Activated CD4-positive, alpha-beta memory T cell treated with anti-CD3 and anti-CD28 coated beads for 36 hours (primary cell): ENCODE measurements at regions of chr7 and their contacts with region 1.

Region 1: DNA sequence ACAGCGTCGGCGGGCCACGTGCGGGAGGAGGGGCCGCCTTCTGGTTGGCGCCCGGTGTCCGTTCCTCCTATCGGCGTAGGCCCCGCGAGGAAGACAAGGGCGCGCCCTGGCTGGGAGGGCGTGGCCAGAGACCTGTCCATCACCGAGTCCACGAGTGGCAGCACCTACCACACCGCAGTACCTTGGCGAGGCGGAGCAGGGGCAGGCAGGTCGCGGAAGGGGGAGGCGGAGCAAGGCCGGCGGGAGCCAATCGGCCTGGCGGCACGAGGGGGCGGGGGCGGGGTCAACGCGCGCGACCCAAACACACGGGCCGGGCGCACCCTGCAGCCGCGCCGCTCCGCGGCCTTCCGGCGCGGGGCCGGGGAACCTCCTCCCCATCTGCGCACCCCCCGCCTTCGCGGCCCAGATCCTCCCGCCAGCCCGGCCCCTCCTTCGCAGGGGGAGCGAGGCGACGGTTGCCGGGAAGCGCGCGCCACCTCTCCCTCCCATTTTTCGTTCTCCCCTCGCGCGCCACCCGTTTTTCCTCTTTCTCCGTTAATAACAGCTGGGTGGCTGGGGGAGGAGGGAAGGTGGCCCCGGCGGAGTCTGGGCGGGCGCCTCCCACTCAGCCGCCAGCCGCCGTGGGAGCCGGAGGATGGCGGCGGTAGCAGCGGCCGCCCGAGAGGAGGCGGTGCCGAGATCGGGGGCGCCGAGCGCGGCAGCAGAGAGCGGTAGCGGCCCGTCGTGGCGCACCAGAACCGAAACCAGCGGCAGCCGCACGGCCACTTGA is at the start of gene ZNRF2:
- DNase-seq: peak; percentile 100
- H3K4me3 Mint-ChIP-seq: peak within 1 kb of the TSS; percentile 78
- H3K27ac Mint-ChIP-seq: peak within 1 kb of the TSS; percentile 90
- H3K4me1 Mint-ChIP-seq: peaks cover 47% of the 10 kb centered on the region
- H3K27me3 Mint-ChIP-seq: no peaks in the 10 kb centered on the region
- total RNA-seq, gene ZNRF2: 9.6 to 10.5 TPM

Region 2: GRCh38 chr7:30134611-30135545 is 149.6 kb before region 1 on chr7 and contains the start of gene MTURN:
- CTCF ChIA-PET with region 1: no interaction called
- POLR2A ChIA-PET with region 1: no interaction called
- intact Hi-C with region 1: loop called (anchors 1 kb)
- DNase-seq: peak; percentile 88
- H3K4me3 Mint-ChIP-seq: peak within 1 kb of the TSS; percentile 86
- H3K27ac Mint-ChIP-seq: peak within 1 kb of the TSS; percentile 45
- H3K4me1 Mint-ChIP-seq: peaks cover 5% of the 10 kb centered on the region
- H3K27me3 Mint-ChIP-seq: no peaks in the 10 kb centered on the region
- total RNA-seq, gene MTURN: 3.1 to 3.7 TPM

Region 3: DNA sequence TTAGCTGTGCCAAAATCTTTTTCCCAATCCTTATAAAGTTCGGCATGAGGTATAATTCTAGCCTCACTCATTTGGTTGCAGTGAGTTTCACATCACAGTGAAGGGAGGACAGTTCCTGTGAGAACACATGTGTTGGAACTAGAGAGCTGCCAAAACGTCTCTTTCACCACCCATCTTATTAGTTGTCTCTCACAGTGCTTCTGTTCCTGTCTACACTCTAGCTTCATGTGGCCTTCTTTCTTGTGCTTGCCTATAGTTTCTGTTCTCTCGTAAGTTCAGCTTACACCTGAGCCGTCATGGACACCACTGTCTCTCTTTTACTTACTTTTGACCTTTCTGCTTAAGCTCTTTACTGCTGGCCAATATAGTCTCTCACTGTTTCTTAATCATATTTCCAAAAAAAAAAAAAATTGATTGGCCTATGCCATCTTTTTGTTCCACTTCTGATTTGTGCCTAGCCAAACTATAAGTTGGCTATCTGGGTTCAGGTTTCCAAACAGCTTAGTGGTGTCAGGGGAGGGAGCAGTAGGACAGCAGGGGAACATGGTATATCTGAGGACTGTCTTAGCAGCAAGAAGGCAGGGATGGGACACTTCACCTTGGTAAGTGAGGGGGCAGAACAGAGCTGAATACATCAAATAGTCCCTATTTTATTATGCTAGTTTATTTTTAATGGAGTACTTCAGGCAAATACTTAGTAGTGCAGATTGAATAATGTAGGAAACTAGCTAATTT is 38.0 kb after region 1 on chr7:
- CTCF ChIA-PET with region 1: interaction called, 10 read pairs
- POLR2A ChIA-PET with region 1: interaction called, 7 read pairs
- intact Hi-C with region 1: loop called (anchors 1 kb)
- DNase-seq: no peak
- H3K4me3 Mint-ChIP-seq: peak overlapping the region; percentile 73
- H3K27ac Mint-ChIP-seq: peak overlapping the region; percentile 86
- H3K4me1 Mint-ChIP-seq: peaks cover 72% of the 10 kb centered on the region
- H3K27me3 Mint-ChIP-seq: no peaks in the 10 kb centered on the region

Region 4: DNA sequence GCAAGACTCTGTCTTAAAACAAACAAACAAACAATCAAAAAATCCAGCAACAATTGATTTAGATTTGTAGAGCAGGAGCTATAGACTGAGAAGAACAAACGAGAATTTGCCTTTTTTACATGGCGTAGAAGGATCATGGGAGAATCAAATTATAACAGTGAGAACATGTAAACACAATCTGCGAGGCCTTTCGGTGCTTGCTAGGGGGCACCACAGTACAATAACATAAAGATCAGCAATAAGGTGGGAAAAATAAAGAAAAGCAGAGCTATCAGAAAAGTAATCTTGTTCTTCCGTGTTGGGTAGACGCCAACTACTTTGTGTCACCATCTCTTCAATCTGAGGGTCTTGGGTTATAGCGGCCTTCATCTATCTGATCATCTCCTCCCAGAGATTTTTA is 111.9 kb after region 1 on chr7:
- CTCF ChIA-PET with region 1: no interaction called
- POLR2A ChIA-PET with region 1: no interaction called
- intact Hi-C with region 1: no loop called
- DNase-seq: no peak
- H3K4me3 Mint-ChIP-seq: no peak overlapping the region
- H3K27ac Mint-ChIP-seq: no peak overlapping the region
- H3K4me1 Mint-ChIP-seq: no peaks in the 10 kb centered on the region
- H3K27me3 Mint-ChIP-seq: no peaks in the 10 kb centered on the region

Region 5: DNA sequence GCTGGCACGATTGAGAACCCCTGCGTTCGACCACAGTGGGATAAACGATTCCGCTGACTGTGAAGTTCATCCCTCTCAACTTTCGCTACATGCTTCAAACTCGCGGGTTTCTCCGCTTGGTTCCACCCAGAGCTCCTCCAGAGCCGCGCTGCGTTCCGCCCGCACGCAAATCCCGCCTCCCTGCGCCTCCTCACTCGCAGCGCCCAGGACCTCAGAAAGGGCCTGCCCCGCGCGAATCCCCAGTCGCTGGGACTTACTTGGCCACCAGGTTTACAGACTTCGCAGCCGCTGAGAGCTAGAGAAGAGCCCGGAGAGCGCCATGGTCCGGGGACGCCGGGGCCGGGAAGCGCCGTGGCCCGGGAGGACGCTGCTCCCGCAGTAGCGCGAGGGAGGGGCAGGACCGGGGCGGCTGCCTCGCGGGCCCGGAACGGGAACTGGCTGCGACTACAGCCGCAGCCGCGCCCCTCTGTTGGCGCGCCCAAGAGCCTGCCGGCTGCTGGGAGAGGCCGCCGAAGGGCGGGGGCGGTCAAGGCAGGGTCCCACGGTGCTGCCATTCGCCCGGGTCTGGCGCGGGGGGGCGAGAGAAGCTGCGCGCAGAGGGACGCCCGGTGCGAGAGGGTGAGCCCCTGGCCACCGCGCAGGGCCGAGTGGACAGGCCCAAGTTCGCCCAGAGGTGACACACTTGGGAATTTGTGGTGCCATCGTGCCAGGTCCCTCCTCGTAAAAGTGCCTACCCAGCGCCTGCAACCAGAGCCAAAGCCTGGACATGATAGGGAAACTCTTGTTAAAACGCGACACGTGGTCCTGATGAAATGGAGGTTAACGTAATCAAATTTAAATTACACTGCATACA is 194.1 kb after region 1 on chr7 and contains the start of gene NOD1:
- CTCF ChIA-PET with region 1: no interaction called
- POLR2A ChIA-PET with region 1: interaction called, 3 read pairs
- intact Hi-C with region 1: loop called (anchors 1 kb)
- DNase-seq: peak; percentile 77
- H3K4me3 Mint-ChIP-seq: peak within 1 kb of the TSS; percentile 91
- H3K27ac Mint-ChIP-seq: peak within 1 kb of the TSS; percentile 85
- H3K4me1 Mint-ChIP-seq: peaks cover 51% of the 10 kb centered on the region
- H3K27me3 Mint-ChIP-seq: no peaks in the 10 kb centered on the region
- total RNA-seq, gene NOD1: 12.8 to 14.0 TPM

Region 6: GRCh38 chr7:30594549-30595435 is 310.3 kb after region 1 on chr7 and contains the start of gene GARS1:
- CTCF ChIA-PET with region 1: no interaction called
- POLR2A ChIA-PET with region 1: no interaction called
- intact Hi-C with region 1: loop called (anchors 1 kb)
- DNase-seq: peak; percentile 92
- H3K4me3 Mint-ChIP-seq: peak within 1 kb of the TSS; percentile 99
- H3K27ac Mint-ChIP-seq: peak within 1 kb of the TSS; percentile 95
- H3K4me1 Mint-ChIP-seq: peaks cover 53% of the 10 kb centered on the region
- H3K27me3 Mint-ChIP-seq: no peaks in the 10 kb centered on the region
- total RNA-seq, gene GARS1: 345 to 368 TPM